Mammary epithelial cell (primary cell): ENCODE measurements at regions of chr5 and their contacts with region 1.

Region 1: DNA sequence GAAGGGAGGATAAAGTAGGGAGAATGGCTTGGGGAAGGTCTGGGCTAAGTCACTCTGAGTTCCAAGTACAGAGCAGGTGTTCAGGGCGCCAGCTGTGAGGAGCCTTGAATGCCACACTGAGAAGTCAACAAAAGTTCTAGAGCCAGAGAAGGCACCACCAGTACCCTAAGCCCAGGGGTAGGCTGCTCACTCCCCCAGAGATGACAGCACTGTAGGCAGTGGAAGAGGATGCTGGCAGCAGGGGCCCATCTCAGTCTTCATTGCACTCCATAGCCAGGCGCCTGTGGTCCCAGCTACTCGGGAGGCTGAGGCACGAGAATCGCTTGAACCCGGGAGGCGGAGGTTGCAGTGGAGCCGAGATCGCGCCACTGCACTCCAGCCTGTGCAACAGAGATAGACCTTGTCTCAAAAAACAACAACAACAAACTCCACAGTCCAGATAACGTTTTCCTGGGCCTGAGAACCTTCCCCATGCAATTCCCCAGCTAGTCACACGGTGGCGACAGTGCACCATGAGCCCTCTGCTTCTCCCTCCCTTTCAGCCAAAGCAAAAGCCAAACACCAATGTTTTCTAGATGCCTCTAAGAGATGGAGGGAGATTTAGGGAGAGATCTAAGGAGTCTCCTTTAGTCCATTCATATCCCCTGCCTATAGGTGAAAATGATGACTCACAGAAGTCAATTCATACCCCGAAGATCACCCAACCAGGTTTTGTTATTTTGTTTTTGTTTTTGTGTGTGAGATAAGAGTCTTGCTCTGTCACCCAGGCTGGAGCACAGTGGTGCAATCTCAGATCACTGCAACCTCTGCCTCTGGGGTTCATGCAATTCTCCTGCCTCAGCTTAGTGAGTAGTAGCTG is 19.8 kb upstream of the NSD1 start:
- DNase-seq: peak; percentile 45
- H3K4me3 ChIP-seq: no peak overlapping the region
- H3K27ac ChIP-seq: no peak overlapping the region
- H3K4me1 ChIP-seq: peaks cover 4% of the 10 kb centered on the region
- H3K27me3 ChIP-seq: no peaks in the 10 kb centered on the region
- CTCF ChIP-seq: peak; percentile 99 to 100

Region 2: GRCh38 chr5:176573564-176574296 is 540.1 kb before region 1 on chr5:
- CTCF ChIA-PET with region 1: no interaction called
- dilution Hi-C with region 1: no loop called
- in situ Hi-C with region 1: no loop called
- intact Hi-C with region 1: loop called (anchors 5 kb)
- DNase-seq: peak; percentile 20
- H3K4me3 ChIP-seq: no peak overlapping the region
- H3K27ac ChIP-seq: no peak overlapping the region
- H3K4me1 ChIP-seq: peaks cover 6% of the 10 kb centered on the region
- H3K27me3 ChIP-seq: no peaks in the 10 kb centered on the region
- CTCF ChIP-seq: peak; percentile 69 to 83

Region 3: GRCh38 chr5:176844706-176845391 is 268.9 kb before region 1 on chr5:
- CTCF ChIA-PET with region 1: no interaction called
- dilution Hi-C with region 1: no loop called
- in situ Hi-C with region 1: no loop called
- intact Hi-C with region 1: no loop called
- DNase-seq: peak; percentile 9
- H3K4me3 ChIP-seq: no peak overlapping the region
- H3K27ac ChIP-seq: no peak overlapping the region
- H3K4me1 ChIP-seq: no peaks in the 10 kb centered on the region
- H3K27me3 ChIP-seq: peaks cover 4% of the 10 kb centered on the region
- CTCF ChIP-seq: no peak

Region 4: DNA sequence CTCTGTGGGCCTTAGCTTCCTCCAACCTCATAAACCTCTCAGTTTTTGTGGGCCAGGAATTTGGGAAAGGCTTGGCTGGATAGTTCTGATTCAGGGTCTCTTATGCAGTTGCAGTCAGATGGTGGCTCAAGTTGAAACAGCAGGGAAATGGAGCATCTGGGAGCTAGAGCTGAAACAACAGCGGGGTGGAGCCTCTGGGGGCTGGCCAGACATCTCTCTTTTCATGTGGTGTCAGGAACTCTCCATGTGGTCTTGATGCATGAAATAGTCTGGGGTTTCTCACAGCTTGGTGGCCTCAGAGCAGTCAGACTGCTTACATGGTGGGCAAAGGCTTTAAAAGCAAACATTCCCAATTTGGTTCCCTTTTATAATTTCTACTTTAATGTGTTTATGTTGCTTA is 77.8 kb before region 1 on chr5:
- CTCF ChIA-PET with region 1: no interaction called
- dilution Hi-C with region 1: loop called (anchors 5 kb)
- in situ Hi-C with region 1: no loop called
- intact Hi-C with region 1: no loop called
- DNase-seq: no peak
- H3K4me3 ChIP-seq: no peak overlapping the region
- H3K27ac ChIP-seq: no peak overlapping the region
- H3K4me1 ChIP-seq: peaks cover 7% of the 10 kb centered on the region
- H3K27me3 ChIP-seq: no peaks in the 10 kb centered on the region
- CTCF ChIP-seq: no peak

Region 5: GRCh38 chr5:177290816-177291596 is 177.2 kb after region 1 on chr5:
- CTCF ChIA-PET with region 1: no interaction called
- dilution Hi-C with region 1: loop called (anchors 5 kb)
- in situ Hi-C with region 1: no loop called
- intact Hi-C with region 1: no loop called
- DNase-seq: no peak
- H3K4me3 ChIP-seq: no peak overlapping the region
- H3K27ac ChIP-seq: no peak overlapping the region
- H3K4me1 ChIP-seq: no peaks in the 10 kb centered on the region
- H3K27me3 ChIP-seq: no peaks in the 10 kb centered on the region
- CTCF ChIP-seq: no peak

Region 6: GRCh38 chr5:177390363-177391300 is 276.8 kb after region 1 on chr5:
- CTCF ChIA-PET with region 1: no interaction called
- dilution Hi-C with region 1: no loop called
- in situ Hi-C with region 1: loop called in 1 of 2 experiments (anchors 10 kb)
- intact Hi-C with region 1: loop called (anchors 1 kb)
- DNase-seq: peak; percentile 73
- H3K4me3 ChIP-seq: no peak overlapping the region
- H3K27ac ChIP-seq: peak overlapping the region; percentile 68
- H3K4me1 ChIP-seq: peaks cover 29% of the 10 kb centered on the region
- H3K27me3 ChIP-seq: no peaks in the 10 kb centered on the region
- CTCF ChIP-seq: peak; percentile 89 to 94

Region 7: GRCh38 chr5:177497292-177498033 is 383.7 kb after region 1 on chr5 and contains the start of gene PDLIM7:
- CTCF ChIA-PET with region 1: no interaction called
- dilution Hi-C with region 1: no loop called
- in situ Hi-C with region 1: no loop called
- intact Hi-C with region 1: loop called (anchors 2 kb)
- DNase-seq: peak; percentile 95
- H3K4me3 ChIP-seq: peak within 1 kb of the TSS; percentile 73 to 80 (median 74)
- H3K27ac ChIP-seq: peak within 1 kb of the TSS; percentile 37
- H3K4me1 ChIP-seq: peaks cover 61% of the 10 kb centered on the region
- H3K27me3 ChIP-seq: no peaks in the 10 kb centered on the region
- CTCF ChIP-seq: peak in 1 of 2 donors; percentile 14
- total RNA-seq, gene PDLIM7: 235 to 259 TPM